Activated naive CD4-positive, alpha-beta T cell treated with anti-CD3 and anti-CD28 coated beads for 36 hours (primary cell): ENCODE measurements at regions of chr20 and their contacts with region 1.

Region 1: GRCh38 chr20:5100684-5101347 is 18.9 kb downstream of the PCNA start:
- DNase-seq: peak; percentile 84
- H3K4me3 Mint-ChIP-seq: no peak overlapping the region
- H3K27ac Mint-ChIP-seq: no peak overlapping the region
- H3K4me1 Mint-ChIP-seq: peaks cover 8% of the 10 kb centered on the region
- H3K27me3 Mint-ChIP-seq: no peaks in the 10 kb centered on the region

Region 2: DNA sequence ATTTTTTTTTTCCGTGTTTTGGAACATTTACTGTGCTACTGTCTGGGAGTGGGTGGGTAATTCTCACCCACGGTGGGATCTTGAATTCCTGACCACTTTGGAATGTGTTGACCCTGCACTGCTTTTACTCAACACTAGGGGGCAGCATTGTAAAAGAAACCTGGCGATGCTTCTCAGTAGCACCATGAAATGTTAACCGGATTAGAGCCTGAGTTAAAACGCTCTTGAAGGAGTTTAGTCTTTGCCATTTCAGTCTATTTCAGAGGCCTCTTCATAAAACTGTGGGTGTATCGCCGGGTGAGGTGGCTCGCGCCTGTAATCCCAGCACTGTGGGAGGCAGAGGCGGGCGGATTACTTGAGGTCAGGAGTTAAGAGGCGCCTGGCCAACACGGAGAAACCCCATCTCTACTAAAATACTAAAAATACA is 493.5 kb before region 1 on chr20:
- CTCF ChIA-PET with region 1: interaction called, 4 read pairs
- intact Hi-C with region 1: loop called (anchors 1 kb)
- DNase-seq: peak; percentile 74
- H3K4me3 Mint-ChIP-seq: no peak overlapping the region
- H3K27ac Mint-ChIP-seq: no peak overlapping the region
- H3K4me1 Mint-ChIP-seq: no peaks in the 10 kb centered on the region
- H3K27me3 Mint-ChIP-seq: peaks cover 2% of the 10 kb centered on the region

Region 3: GRCh38 chr20:4956200-4956810 is 144.5 kb before region 1 on chr20:
- CTCF ChIA-PET with region 1: interaction called, 12 read pairs
- intact Hi-C with region 1: loop called (anchors 1 kb)
- DNase-seq: no peak
- H3K4me3 Mint-ChIP-seq: no peak overlapping the region
- H3K27ac Mint-ChIP-seq: no peak overlapping the region
- H3K4me1 Mint-ChIP-seq: peaks cover 10% of the 10 kb centered on the region
- H3K27me3 Mint-ChIP-seq: no peaks in the 10 kb centered on the region

Region 4: GRCh38 chr20:5001174-5002076 is 99.4 kb before region 1 on chr20 and contains the start of gene SLC23A2:
- CTCF ChIA-PET with region 1: interaction called, 10 read pairs
- intact Hi-C with region 1: loop called (anchors 2 kb)
- DNase-seq: peak; percentile 60
- H3K4me3 Mint-ChIP-seq: peak within 1 kb of the TSS; percentile 87
- H3K27ac Mint-ChIP-seq: peak within 1 kb of the TSS; percentile 79
- H3K4me1 Mint-ChIP-seq: peaks cover 30% of the 10 kb centered on the region
- H3K27me3 Mint-ChIP-seq: no peaks in the 10 kb centered on the region
- total RNA-seq, gene SLC23A2: 16.4 to 18.1 TPM

Region 5: DNA sequence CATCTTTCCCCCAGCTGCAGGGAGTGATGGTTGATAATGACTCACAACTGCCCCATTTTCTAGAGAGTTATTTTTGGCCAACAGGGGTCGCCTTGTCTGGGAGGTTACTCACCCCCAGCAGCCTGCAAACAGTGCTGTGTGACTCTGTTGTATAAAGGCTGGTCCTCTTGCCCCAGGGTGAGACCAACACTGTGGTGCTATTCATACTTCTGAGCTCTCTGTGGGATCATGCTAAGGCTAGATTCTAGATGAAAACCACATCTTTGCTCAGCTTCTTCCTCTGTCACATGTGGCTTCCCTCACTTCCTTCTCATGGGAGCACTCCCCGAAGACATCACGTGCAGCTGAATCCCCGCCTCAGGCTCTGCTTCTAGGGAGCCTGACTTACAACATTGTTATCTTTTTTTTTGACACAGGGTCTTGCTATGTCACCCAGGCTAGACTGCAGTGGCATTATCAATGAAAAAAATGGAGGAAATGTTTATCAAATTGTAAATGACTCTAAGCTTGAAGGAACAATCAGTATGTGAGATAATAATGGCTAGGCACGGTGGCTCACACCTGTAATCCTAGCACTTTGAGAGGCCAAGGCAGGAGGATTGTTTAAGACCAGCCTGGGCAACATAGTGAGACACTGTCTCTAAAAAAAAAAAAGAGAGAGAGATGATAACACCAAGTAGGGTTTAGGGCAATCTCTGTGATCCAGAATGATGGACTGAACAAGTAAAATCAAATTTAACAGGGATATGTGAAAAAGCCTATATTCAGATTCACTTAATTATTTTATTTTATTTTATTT is 43.8 kb before region 1 on chr20:
- CTCF ChIA-PET with region 1: interaction called, 56 read pairs
- intact Hi-C with region 1: loop called (anchors 1 kb)
- DNase-seq: peak; percentile 84
- H3K4me3 Mint-ChIP-seq: peak overlapping the region; percentile 10
- H3K27ac Mint-ChIP-seq: peak overlapping the region; percentile 46
- H3K4me1 Mint-ChIP-seq: peaks cover 16% of the 10 kb centered on the region
- H3K27me3 Mint-ChIP-seq: no peaks in the 10 kb centered on the region

Region 6: DNA sequence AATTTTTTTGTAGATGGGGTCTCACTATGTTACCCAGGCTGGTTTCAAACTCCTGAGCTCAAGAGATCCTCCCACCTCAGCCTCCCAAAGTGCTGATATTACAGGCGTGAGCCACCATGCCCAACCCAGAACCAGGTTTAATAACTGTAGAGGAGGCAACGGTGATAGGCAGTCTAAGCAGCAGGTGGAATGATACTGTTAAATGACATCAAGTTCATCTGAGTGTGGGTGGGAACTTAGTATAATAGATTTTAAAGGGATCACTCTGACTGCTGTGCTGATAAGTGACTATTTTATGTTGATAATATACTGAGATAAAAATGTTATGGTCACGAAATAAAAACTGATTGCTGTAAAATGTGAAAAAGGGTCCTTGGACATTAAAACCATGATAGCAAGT is 12.1 kb before region 1 on chr20:
- CTCF ChIA-PET with region 1: interaction called, 24 read pairs
- intact Hi-C with region 1: no loop called
- DNase-seq: no peak
- H3K4me3 Mint-ChIP-seq: no peak overlapping the region
- H3K27ac Mint-ChIP-seq: no peak overlapping the region
- H3K4me1 Mint-ChIP-seq: peaks cover 14% of the 10 kb centered on the region
- H3K27me3 Mint-ChIP-seq: no peaks in the 10 kb centered on the region

Region 7: GRCh38 chr20:5113615-5113986 is 12.8 kb after region 1 on chr20:
- CTCF ChIA-PET with region 1: interaction called, 10 read pairs
- intact Hi-C with region 1: no loop called
- DNase-seq: no peak
- H3K4me3 Mint-ChIP-seq: peak overlapping the region; percentile 89
- H3K27ac Mint-ChIP-seq: peak overlapping the region; percentile 89
- H3K4me1 Mint-ChIP-seq: peaks cover 43% of the 10 kb centered on the region
- H3K27me3 Mint-ChIP-seq: no peaks in the 10 kb centered on the region